ENCODE measurements at regions of chr1 and their contacts with region 1.

Region 1: DNA sequence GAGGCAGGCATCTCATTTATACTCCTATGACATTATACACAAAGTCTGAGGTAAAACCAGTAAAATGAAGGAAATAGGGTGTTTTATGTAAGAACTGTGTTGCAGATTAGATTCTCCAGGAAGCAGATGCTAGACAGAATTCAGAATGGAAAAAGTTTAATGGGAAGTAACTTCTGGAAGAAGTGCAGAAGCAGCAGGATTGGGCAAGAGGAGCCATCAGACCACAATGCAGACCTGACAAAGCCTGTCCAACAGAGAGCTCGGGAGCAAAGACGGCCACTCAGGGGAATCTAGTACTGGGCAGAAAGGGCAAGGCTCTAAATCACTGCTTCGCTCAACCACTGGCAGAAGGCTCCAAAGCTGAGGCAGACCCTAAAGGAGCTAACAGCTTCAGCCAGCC is 33.7 kb downstream of the FBXO42 start:
- DNase-seq: no peak
- ATAC-seq: no peak
- H3K4me3 ChIP-seq: no peak overlapping the region
- H3K27ac ChIP-seq: no peak overlapping the region
- H3K4me1 ChIP-seq: peaks cover 5% of the 10 kb centered on the region
- H3K27me3 ChIP-seq: no peaks in the 10 kb centered on the region
- CTCF ChIP-seq: no peak
- POLR2A ChIP-seq: no peak
- RAD21 ChIP-seq: no peak

Region 2: DNA sequence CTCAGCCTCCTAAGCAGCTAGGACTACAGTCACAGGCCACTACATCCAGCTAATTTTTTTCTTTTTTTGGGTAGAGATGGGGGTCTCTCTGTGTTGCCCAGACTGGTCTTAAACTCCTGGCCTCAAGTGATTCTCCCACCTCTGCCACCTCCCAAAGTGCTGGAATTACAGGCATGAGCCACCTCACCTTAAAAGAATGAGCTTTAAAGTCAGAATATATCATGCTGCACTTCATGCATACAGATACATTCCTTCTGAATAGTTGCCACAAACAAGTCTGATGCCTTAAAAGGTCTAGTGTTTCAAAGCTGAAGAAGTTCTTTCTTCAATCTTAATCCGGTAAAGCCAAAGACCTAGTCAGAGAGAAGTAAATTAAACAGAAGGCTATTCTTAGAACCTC is 57.7 kb before region 1 on chr1:
- CTCF ChIA-PET with region 1: no interaction called
- POLR2A ChIA-PET with region 1: no interaction called
- dilution Hi-C with region 1: no loop called
- in situ Hi-C with region 1: no loop called
- intact Hi-C with region 1: loop called (anchors 5 kb)
- DNase-seq: peak; percentile 81
- ATAC-seq: peak; percentile 85
- H3K4me3 ChIP-seq: no peak overlapping the region
- H3K27ac ChIP-seq: peak overlapping the region; percentile 84
- H3K4me1 ChIP-seq: peaks cover 10% of the 10 kb centered on the region
- H3K27me3 ChIP-seq: no peaks in the 10 kb centered on the region
- CTCF ChIP-seq: no peak
- POLR2A ChIP-seq: no peak
- RAD21 ChIP-seq: no peak

Measured in IMR-90 (cell line).